PC-9 (cell line): ENCODE measurements at regions of chr19 and their contacts with region 1.

Region 1: GRCh38 chr19:6298413-6298812 is 18.6 kb upstream of the MLLT1 start:
- DNase-seq: no peak
- H3K4me3 ChIP-seq: no peak overlapping the region
- H3K27ac ChIP-seq: no peak overlapping the region
- H3K4me1 ChIP-seq: no peaks in the 10 kb centered on the region
- H3K27me3 ChIP-seq: peaks cover 3% of the 10 kb centered on the region; the same call in 1 of the 2 replicates
- CTCF ChIP-seq: no peak

Region 2: DNA sequence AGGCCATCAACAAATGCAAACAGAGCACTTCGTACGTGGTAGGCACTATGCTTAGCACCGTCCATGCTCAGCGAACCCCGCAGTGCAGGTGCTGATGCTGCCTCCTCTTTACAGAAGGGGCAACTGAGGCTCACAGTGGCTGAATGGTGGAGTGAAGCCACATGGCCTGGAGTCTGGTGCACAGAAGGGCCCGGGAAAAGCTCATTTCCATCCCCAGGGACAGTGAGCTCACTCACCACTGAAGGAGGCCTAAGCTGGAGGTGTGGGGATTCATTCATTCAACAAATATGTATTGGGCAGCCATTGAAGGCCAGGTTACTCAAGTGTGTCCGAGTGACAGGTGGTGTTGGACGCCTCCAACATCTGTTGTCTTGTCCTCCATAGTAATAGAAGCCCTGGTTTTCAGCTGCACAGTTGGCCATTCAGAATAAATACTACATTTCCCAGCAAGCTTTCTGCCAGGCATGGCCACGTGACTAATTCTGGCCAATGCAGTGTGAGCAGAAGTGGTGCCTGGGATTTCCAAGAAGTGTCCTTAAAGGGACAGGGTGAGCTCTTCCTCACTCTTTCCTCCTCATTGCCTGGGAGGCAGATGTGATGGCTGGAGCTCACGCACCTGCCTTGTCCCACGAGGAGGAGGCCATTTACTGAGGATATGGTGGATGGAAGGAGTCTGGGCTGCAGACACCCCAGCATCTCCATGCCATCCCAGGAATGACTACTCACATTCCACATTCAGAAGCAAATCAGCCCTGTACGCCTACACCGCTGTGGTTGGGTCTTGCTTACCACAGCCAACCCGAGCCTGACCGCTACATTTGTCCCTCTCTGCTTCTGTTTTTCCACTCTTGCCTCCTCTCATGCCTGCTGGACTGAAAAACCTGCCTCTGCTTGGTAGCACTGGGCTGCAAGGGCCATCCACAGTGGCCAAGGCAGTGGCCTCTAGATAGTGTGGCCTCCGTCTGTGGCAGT is 845.5 kb before region 1 on chr19:
- CTCF ChIA-PET with region 1: no interaction called
- POLR2A ChIA-PET with region 1: no interaction called
- intact Hi-C with region 1: no loop called
- DNase-seq: peak in 1 of 2 experiments; percentile 23
- H3K4me3 ChIP-seq: no peak overlapping the region
- H3K27ac ChIP-seq: no peak overlapping the region
- H3K4me1 ChIP-seq: no peaks in the 10 kb centered on the region
- H3K27me3 ChIP-seq: 0 out of 2 replicates have a peak, but pooled peaks cover under 1% of the 10 kb centered on the region
- CTCF ChIP-seq: no peak

Region 3: GRCh38 chr19:6813659-6814058 is 515.2 kb after region 1 on chr19:
- CTCF ChIA-PET with region 1: no interaction called
- POLR2A ChIA-PET with region 1: interaction called, 12 read pairs
- intact Hi-C with region 1: no loop called
- DNase-seq: no peak
- H3K4me3 ChIP-seq: no peak overlapping the region
- H3K27ac ChIP-seq: no peak overlapping the region
- H3K4me1 ChIP-seq: peaks cover 9% of the 10 kb centered on the region
- H3K27me3 ChIP-seq: no peaks in the 10 kb centered on the region
- CTCF ChIP-seq: no peak